Panc1 (cell line): ENCODE measurements at regions of chr3 and their contacts with region 1.

Region 1: DNA sequence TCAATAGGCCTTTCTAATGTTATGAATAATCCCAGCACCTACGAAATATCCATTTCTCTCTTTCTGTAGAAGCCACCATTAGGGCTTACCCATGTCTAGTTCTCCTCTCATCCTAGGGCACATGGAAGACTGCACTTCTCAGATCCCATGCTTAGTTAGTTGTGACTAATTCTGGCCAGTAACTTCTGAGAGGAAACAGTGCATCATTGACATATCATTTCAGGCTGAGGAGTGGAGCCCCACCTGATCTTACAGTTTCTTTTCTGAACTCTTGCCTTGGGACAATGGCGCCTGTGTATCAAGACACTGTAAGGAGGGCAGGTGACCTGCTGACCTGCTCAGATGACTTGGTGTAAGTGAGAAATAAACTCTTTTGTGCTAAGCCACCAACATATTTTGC is 39.4 kb upstream of the TBL1XR1 start:
- DNase-seq: no peak
- ATAC-seq: peak; percentile 45; the same call in 1 of the 2 replicates
- H3K4me3 ChIP-seq: no peak overlapping the region
- H3K27ac ChIP-seq: peak overlapping the region; percentile 25; the same call in 1 of the 2 replicates
- H3K4me1 ChIP-seq: no peaks in the 10 kb centered on the region
- H3K27me3 ChIP-seq: no peaks in the 10 kb centered on the region
- CTCF ChIP-seq: no peak

Region 2: GRCh38 chr3:176247191-176247590 is 989.5 kb before region 1 on chr3:
- CTCF ChIA-PET with region 1: no interaction called
- POLR2A ChIA-PET with region 1: no interaction called
- in situ Hi-C with region 1: no loop called
- intact Hi-C with region 1: no loop called
- DNase-seq: no peak
- ATAC-seq: no peak
- H3K4me3 ChIP-seq: no peak overlapping the region
- H3K27ac ChIP-seq: no peak overlapping the region
- H3K4me1 ChIP-seq: no peaks in the 10 kb centered on the region
- H3K27me3 ChIP-seq: no peaks in the 10 kb centered on the region
- CTCF ChIP-seq: no peak

Region 3: DNA sequence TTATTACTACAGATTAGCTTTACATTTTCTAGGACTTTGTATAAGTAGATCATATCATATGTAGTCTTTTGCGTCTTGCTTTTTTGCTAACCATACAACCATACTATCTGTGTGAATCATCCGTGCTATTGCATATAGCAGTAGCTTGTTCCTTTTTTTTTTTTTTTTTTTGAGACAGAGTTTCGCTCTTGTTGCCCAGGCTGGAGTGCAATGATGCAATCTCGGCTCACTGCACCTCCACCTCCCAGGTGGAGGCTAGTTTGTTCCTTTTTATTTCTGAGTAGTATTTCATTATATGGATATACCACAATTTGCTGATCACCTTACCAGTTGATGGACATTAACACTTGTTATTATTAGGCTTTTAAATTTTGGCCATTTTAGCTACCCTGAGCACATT is 15.1 kb after region 1 on chr3:
- CTCF ChIA-PET with region 1: no interaction called
- POLR2A ChIA-PET with region 1: interaction called, 14 read pairs
- in situ Hi-C with region 1: no loop called
- intact Hi-C with region 1: no loop called
- DNase-seq: no peak
- ATAC-seq: no peak
- H3K4me3 ChIP-seq: no peak overlapping the region
- H3K27ac ChIP-seq: no peak overlapping the region
- H3K4me1 ChIP-seq: peaks cover 5% of the 10 kb centered on the region; the same call in 1 of the 2 replicates
- H3K27me3 ChIP-seq: no peaks in the 10 kb centered on the region
- CTCF ChIP-seq: no peak